ENCODE measurements at regions of chr7 and their contacts with region 1.

Region 1: GRCh38 chr7:150668472-150668911 is 17.0 kb upstream of the GIMAP2 start:
- DNase-seq: peak; percentile 53 to 89
- ATAC-seq: peak; percentile 73 to 88 (median 80)
- H3K4me3 ChIP-seq: no peak overlapping the region
- H3K4me3 Mint-ChIP-seq: peak overlapping the region; percentile 58
- H3K27ac ChIP-seq: peak overlapping the region; percentile 96
- H3K27ac Mint-ChIP-seq: peak overlapping the region; percentile 99 to 100
- H3K4me1 ChIP-seq: peaks cover 62% of the 10 kb centered on the region
- H3K4me1 Mint-ChIP-seq: peaks cover 81 to 85% of the 10 kb centered on the region in 2 donors
- H3K27me3 ChIP-seq: no peaks in the 10 kb centered on the region
- H3K27me3 Mint-ChIP-seq: no peaks in the 10 kb centered on the region
- CTCF ChIP-seq: no peak

Region 2: DNA sequence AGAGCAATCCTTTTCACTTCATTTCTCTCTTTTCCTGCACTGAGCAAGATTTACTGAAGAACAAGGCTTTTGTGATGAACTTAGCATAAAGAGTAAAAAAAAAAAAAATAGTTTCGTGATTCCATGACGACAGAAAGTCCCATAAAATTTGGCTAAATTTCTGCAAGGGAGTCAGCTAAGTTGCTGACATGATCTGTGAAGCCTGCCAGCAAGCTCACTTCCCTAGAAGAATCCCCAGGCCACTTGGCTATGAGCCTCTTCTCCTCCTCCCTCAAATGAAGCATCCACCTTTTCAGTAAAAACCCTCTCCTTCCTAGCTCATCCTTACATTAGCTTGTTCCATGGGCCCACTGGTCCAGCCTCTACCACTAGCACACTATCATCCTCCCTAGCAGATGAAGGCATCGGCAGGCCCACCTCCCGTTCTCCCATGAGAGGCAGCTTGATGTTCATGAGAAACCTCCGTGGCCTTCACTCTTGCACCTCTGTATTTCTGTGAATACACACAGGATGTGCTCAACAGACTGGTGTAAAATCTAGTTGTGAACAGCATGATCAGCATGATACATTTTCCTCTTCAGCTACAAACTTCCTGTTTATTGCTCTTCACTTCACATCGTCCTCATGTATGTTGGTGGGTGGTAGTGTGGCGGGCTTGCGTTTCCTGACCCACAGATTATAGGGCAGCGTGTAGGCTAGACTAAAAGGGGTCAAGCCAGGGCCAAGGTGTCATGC is 187.1 kb before region 1 on chr7:
- intact Hi-C with region 1: loop called (anchors 1 kb)
- DNase-seq: peak; percentile 58 to 79
- ATAC-seq: peak; percentile 86 to 94 (median 92)
- H3K4me3 ChIP-seq: no peak overlapping the region
- H3K4me3 Mint-ChIP-seq: peak overlapping the region; percentile 83
- H3K27ac ChIP-seq: peak overlapping the region; percentile 89
- H3K27ac Mint-ChIP-seq: peak overlapping the region; percentile 96 to 97
- H3K4me1 ChIP-seq: peaks cover 40% of the 10 kb centered on the region
- H3K4me1 Mint-ChIP-seq: peaks cover 84 to 89% of the 10 kb centered on the region in 2 donors
- H3K27me3 ChIP-seq: no peaks in the 10 kb centered on the region
- H3K27me3 Mint-ChIP-seq: no peaks in the 10 kb centered on the region
- CTCF ChIP-seq: no peak

Region 3: GRCh38 chr7:150567169-150567568 is 101.3 kb before region 1 on chr7 and contains the start of gene GIMAP4:
- intact Hi-C with region 1: loop called (anchors 2 kb)
- DNase-seq: peak in 1 of 2 donors; percentile 66
- ATAC-seq: peak; percentile 52 to 63 (median 58)
- H3K4me3 ChIP-seq: peak within 1 kb of the TSS; percentile 72
- H3K4me3 Mint-ChIP-seq: peak within 1 kb of the TSS; percentile 96
- H3K27ac ChIP-seq: peak within 1 kb of the TSS; percentile 66
- H3K27ac Mint-ChIP-seq: peak within 1 kb of the TSS; percentile 90 to 95
- H3K4me1 ChIP-seq: peaks cover 52% of the 10 kb centered on the region
- H3K4me1 Mint-ChIP-seq: peaks cover 69 to 80% of the 10 kb centered on the region in 2 donors
- H3K27me3 ChIP-seq: no peaks in the 10 kb centered on the region
- H3K27me3 Mint-ChIP-seq: no peaks in the 10 kb centered on the region
- CTCF ChIP-seq: no peak
- total RNA-seq, gene GIMAP4: 105 to 215 (median 124) TPM

Region 4: GRCh38 chr7:150610233-150610632 is 58.3 kb before region 1 on chr7:
- intact Hi-C with region 1: no loop called
- DNase-seq: no peak
- ATAC-seq: no peak
- H3K4me3 ChIP-seq: no peak overlapping the region
- H3K4me3 Mint-ChIP-seq: no peak overlapping the region
- H3K27ac ChIP-seq: no peak overlapping the region
- H3K27ac Mint-ChIP-seq: no peak overlapping the region
- H3K4me1 ChIP-seq: no peaks in the 10 kb centered on the region
- H3K4me1 Mint-ChIP-seq: peaks cover 23 to 35% of the 10 kb centered on the region in 2 donors
- H3K27me3 ChIP-seq: no peaks in the 10 kb centered on the region
- H3K27me3 Mint-ChIP-seq: no peaks in the 10 kb centered on the region
- CTCF ChIP-seq: no peak

Region 5: DNA sequence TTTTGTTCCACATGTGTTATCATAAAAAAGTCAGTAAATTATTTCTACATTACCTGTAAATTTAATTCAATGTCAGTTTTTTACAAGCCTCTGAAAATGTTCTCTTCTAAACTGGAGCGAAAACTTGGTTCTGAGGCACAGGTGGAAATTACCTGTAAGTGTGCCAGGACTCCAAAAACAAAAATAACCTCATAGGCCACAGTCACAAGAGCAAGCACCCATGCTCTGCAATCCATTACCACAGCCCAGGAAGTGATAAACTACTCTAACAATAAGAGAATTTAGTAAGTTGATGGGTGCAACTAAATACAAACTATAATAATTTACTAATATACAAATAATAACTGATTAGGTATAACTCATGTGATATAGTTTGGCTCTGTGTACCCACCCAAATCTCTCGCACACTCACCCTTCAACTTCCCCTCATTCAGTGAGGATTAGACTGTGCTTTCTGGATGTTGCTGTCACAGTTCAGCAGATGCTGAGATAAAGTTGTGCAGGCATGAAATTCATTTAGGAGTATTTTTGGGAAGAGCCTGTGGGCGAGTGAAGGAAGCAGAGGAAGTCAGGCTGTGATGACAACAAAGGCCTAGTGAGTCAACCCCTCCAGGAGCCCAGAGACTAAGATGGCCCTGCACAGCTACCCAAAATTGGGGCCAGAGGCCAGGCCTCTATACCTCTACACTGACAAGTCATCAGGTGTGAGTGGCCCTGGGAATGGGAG is 20.0 kb before region 1 on chr7:
- intact Hi-C with region 1: no loop called
- DNase-seq: peak in 1 of 2 donors; percentile 69
- ATAC-seq: no peak
- H3K4me3 ChIP-seq: no peak overlapping the region
- H3K4me3 Mint-ChIP-seq: no peak overlapping the region
- H3K27ac ChIP-seq: peak overlapping the region; percentile 28
- H3K27ac Mint-ChIP-seq: peak overlapping the region in 1 of 2 donors; percentile 35
- H3K4me1 ChIP-seq: peaks cover 9% of the 10 kb centered on the region
- H3K4me1 Mint-ChIP-seq: peaks cover 17 to 27% of the 10 kb centered on the region in 2 donors
- H3K27me3 ChIP-seq: no peaks in the 10 kb centered on the region
- H3K27me3 Mint-ChIP-seq: no peaks in the 10 kb centered on the region
- CTCF ChIP-seq: no peak

Region 6: GRCh38 chr7:150685219-150686029 is 16.9 kb after region 1 on chr7 and contains the start of gene GIMAP2:
- intact Hi-C with region 1: loop called (anchors 1 kb)
- DNase-seq: peak in 1 of 2 donors; percentile 78
- ATAC-seq: peak; percentile 78 to 88 (median 79)
- H3K4me3 ChIP-seq: peak within 1 kb of the TSS; percentile 92
- H3K4me3 Mint-ChIP-seq: peak within 1 kb of the TSS; percentile 83
- H3K27ac ChIP-seq: peak within 1 kb of the TSS; percentile 96
- H3K27ac Mint-ChIP-seq: peak within 1 kb of the TSS; percentile 97 to 99
- H3K4me1 ChIP-seq: peaks cover 55% of the 10 kb centered on the region
- H3K4me1 Mint-ChIP-seq: peaks cover 89 to 97% of the 10 kb centered on the region in 2 donors
- H3K27me3 ChIP-seq: no peaks in the 10 kb centered on the region
- H3K27me3 Mint-ChIP-seq: no peaks in the 10 kb centered on the region
- CTCF ChIP-seq: no peak
- total RNA-seq, gene GIMAP2: 47.5 to 77.5 (median 61.0) TPM

Region 7: GRCh38 chr7:150695654-150696053 is 27.2 kb after region 1 on chr7:
- intact Hi-C with region 1: no loop called
- DNase-seq: no peak
- ATAC-seq: no peak
- H3K4me3 ChIP-seq: no peak overlapping the region
- H3K4me3 Mint-ChIP-seq: no peak overlapping the region
- H3K27ac ChIP-seq: no peak overlapping the region
- H3K27ac Mint-ChIP-seq: peak overlapping the region in 1 of 2 donors; percentile 77
- H3K4me1 ChIP-seq: peaks cover 8% of the 10 kb centered on the region
- H3K4me1 Mint-ChIP-seq: peaks cover 18 to 19% of the 10 kb centered on the region in 2 donors
- H3K27me3 ChIP-seq: no peaks in the 10 kb centered on the region
- H3K27me3 Mint-ChIP-seq: no peaks in the 10 kb centered on the region
- CTCF ChIP-seq: no peak

Region 8: GRCh38 chr7:150737265-150738055 is 69.0 kb after region 1 on chr7 and contains the start of gene GIMAP5:
- intact Hi-C with region 1: loop called (anchors 2 kb)
- DNase-seq: peak; percentile 51 to 71
- ATAC-seq: peak; percentile 85 to 88 (median 85)
- H3K4me3 ChIP-seq: peak within 1 kb of the TSS; percentile 84
- H3K4me3 Mint-ChIP-seq: peak within 1 kb of the TSS; percentile 91
- H3K27ac ChIP-seq: peak within 1 kb of the TSS; percentile 64
- H3K27ac Mint-ChIP-seq: peak within 1 kb of the TSS; percentile 86 to 91
- H3K4me1 ChIP-seq: peaks cover 35% of the 10 kb centered on the region
- H3K4me1 Mint-ChIP-seq: peaks cover 66 to 73% of the 10 kb centered on the region in 2 donors
- H3K27me3 ChIP-seq: no peaks in the 10 kb centered on the region
- H3K27me3 Mint-ChIP-seq: no peaks in the 10 kb centered on the region
- CTCF ChIP-seq: no peak
- total RNA-seq, gene GIMAP5: 29.2 to 64.1 (median 35.3) TPM

Region 9: DNA sequence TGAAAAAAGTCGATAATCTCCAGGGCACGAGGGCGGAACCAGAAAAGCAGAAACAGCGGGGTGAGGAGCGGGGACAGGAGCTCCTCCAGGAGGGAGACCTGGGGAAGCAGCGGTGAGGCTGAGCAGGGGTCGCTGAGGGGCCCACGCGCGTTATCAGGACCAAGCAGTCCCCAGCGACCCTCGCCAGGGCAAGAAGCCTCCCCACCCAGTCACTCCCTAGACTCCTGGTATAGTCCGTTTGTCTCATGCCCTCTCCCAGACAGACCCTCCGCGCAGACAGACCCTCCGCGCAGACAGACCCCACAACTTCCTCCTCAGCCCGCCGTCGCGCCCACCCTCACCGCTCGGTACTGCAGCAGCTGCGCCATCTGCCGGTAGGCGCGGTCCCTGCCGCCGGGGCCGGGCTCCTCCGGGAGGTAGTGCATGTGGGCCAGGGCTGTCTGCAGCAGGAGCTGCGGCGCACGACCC is 349.5 kb after region 1 on chr7:
- intact Hi-C with region 1: loop called (anchors 10 kb)
- DNase-seq: peak; percentile 76 to 87
- ATAC-seq: peak; percentile 56 to 61 (median 59)
- H3K4me3 ChIP-seq: peak overlapping the region; percentile 23
- H3K4me3 Mint-ChIP-seq: peak overlapping the region; percentile 87
- H3K27ac ChIP-seq: no peak overlapping the region
- H3K27ac Mint-ChIP-seq: peak overlapping the region; percentile 18 to 77
- H3K4me1 ChIP-seq: peaks cover 46% of the 10 kb centered on the region
- H3K4me1 Mint-ChIP-seq: peaks cover 38 to 54% of the 10 kb centered on the region in 2 donors
- H3K27me3 ChIP-seq: peaks cover 19% of the 10 kb centered on the region
- H3K27me3 Mint-ChIP-seq: peaks cover 0 to 41% of the 10 kb centered on the region in 2 donors
- CTCF ChIP-seq: peak; percentile 95

Region 10: DNA sequence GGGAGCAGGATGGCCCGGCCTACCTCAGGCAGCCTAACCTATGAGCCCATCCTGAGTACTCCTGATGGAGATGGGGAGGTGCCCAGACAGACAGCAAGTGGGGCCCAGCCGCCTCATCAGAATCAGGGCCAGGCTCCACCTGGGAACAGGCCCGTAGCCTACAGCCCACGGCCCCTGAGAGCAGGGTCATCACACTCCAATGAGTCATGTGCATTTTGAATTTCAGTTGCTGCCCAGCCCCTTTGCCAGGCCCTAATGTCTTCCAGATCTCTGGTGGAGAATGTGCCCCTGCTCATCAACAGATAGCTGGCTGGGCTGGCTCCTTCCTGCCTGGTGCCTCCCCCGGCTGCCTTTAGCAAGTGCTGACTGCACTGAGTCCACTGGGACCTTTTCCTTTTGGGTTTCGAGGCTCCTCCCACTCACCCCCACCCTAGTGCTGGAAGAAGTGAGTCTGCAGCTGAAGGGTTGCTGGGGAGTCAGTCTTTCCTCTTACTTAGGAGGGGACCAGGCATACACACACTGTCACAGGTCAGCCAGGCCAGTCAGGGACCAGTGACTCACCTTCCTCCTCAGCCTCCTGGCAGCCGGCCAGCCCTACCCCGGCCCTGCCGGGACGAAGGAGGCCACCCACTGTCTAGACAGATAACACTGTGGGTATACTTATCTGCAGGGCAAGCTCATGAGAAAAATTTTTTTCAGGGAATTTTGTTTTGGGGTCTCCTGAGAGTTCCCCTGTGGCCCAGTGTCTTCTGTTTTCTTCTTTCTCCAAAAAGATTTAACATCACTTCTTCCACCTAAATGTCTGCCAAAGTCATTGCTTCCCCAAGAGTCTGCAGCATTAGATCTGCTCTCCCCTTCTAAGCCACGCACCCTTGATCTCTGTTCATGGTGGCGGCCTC is 370.7 kb after region 1 on chr7:
- intact Hi-C with region 1: no loop called
- DNase-seq: peak in 1 of 2 donors; percentile 32
- ATAC-seq: peak; percentile 53 to 69 (median 66)
- H3K4me3 ChIP-seq: no peak overlapping the region
- H3K4me3 Mint-ChIP-seq: no peak overlapping the region
- H3K27ac ChIP-seq: no peak overlapping the region
- H3K27ac Mint-ChIP-seq: peak overlapping the region; percentile 26 to 53
- H3K4me1 ChIP-seq: no peaks in the 10 kb centered on the region
- H3K4me1 Mint-ChIP-seq: peaks cover 9 to 14% of the 10 kb centered on the region in 2 donors
- H3K27me3 ChIP-seq: no peaks in the 10 kb centered on the region
- H3K27me3 Mint-ChIP-seq: no peaks in the 10 kb centered on the region
- CTCF ChIP-seq: no peak

Measured in natural killer cell (primary cell).